Heart right ventricle (tissue), 16 donors: ENCODE measurements at regions of chr2 and their contacts with region 1.

Region 1: GRCh38 chr2:21175895-21176646 is 52.3 kb downstream of the TDRD15 start:
- DNase-seq: peak in 1 of 2 donors; percentile 11
- ATAC-seq: peak in 5 of 8 donors; percentile 17 to 59 (median 30)
- H3K4me3 ChIP-seq: peak overlapping the region in 1 of 10 donors; percentile 4
- H3K27ac ChIP-seq: peak overlapping the region in 1 of 10 donors; percentile 21
- H3K4me1 ChIP-seq: peaks cover 0 to 8% (median 3%) of the 10 kb centered on the region in 9 donors
- H3K27me3 ChIP-seq: peaks cover 0 to 3% (median 0%) of the 10 kb centered on the region in 7 donors
- CTCF ChIP-seq: peak; percentile 22 to 69 (median 52)

Region 2: GRCh38 chr2:21096458-21096857 is 79.6 kb before region 1 on chr2:
- intact Hi-C with region 1: no loop called
- DNase-seq: no peak
- ATAC-seq: peak in 1 of 8 donors; percentile 32
- H3K4me3 ChIP-seq: no peak overlapping the region
- H3K27ac ChIP-seq: no peak overlapping the region
- H3K4me1 ChIP-seq: peaks cover 0 to 6% (median 0%) of the 10 kb centered on the region in 9 donors
- H3K27me3 ChIP-seq: no peaks in the 10 kb centered on the region
- CTCF ChIP-seq: no peak

Region 3: GRCh38 chr2:21317131-21317530 is 141.1 kb after region 1 on chr2:
- intact Hi-C with region 1: loop called (anchors 1 to 5 kb)
- DNase-seq: peak; percentile 3 to 37
- ATAC-seq: peak; percentile 53 to 79 (median 66)
- H3K4me3 ChIP-seq: no peak overlapping the region
- H3K27ac ChIP-seq: no peak overlapping the region
- H3K4me1 ChIP-seq: peaks cover 0 to 8% (median 0%) of the 10 kb centered on the region in 9 donors
- H3K27me3 ChIP-seq: no peaks in the 10 kb centered on the region
- CTCF ChIP-seq: peak; percentile 62 to 82 (median 79)

Region 4: DNA sequence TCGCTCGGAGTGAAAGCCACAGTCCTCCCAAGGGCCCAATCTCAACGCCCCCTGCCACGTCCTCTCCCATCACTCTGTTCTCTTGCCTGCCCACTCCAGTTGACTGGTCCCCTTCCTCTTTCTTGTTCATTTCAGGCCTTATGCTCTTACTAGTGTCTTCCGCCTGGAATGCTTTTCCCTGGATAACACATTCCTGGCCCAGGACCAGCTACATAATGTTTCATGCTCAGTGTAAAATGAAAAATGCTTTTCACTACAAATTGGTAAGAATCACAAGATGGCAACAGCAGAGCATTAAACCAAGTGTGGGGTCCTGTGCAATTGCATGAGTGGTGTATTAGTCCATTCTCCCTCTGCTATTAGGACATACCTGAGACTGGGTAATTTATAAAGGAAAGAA is 1791.7 kb after region 1 on chr2:
- intact Hi-C with region 1: loop called in 1 of 10 experiments (anchors 5 kb)
- DNase-seq: no peak
- ATAC-seq: no peak
- H3K4me3 ChIP-seq: no peak overlapping the region
- H3K27ac ChIP-seq: no peak overlapping the region
- H3K4me1 ChIP-seq: no peaks in the 10 kb centered on the region
- H3K27me3 ChIP-seq: no peaks in the 10 kb centered on the region
- CTCF ChIP-seq: no peak